Lower leg skin (tissue), 4 donors: ENCODE measurements at regions of chr6 and their contacts with region 1.

Region 1: DNA sequence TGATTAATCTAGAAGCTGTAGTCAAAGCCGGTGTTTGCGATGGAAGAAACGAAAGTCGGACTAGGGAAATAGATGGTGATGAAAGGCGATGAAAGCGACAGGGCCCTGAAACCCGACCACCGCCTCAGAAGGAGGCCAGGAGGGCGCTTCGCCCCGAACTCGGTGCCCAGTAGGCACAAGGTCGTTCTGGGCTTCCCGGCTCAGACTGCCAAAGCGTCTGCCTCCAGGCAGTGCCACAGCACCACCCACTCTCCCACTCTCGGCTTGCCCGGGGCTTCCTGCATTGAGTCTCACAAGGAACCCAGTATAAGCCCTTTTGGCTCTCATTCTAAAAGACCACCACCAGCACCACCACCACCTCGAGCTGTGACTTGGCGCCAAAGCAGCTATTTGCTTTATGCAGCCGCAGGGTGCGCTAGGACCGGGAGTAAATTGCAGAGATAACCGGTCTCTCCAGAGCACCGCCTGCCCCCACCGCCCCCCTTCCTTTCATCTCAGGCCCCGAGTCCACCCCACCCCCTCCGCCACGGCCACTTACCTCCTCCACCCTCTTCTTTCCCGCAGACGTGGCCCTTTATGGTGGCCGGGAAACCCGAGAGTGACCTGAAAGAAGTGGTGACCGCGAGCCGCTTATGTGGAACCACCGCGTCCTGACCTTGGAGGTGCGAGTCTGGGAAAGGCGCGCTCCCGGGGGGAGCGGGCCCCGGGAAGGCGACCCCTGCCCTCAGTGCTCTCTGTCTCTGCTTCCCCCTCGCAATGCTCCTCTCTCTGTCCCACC is 2.4 kb downstream of the TCF21 start:
- DNase-seq: no peak
- H3K4me3 ChIP-seq: no peak overlapping the region
- CTCF ChIP-seq: no peak
- POLR2A ChIP-seq: no peak

Region 2: DNA sequence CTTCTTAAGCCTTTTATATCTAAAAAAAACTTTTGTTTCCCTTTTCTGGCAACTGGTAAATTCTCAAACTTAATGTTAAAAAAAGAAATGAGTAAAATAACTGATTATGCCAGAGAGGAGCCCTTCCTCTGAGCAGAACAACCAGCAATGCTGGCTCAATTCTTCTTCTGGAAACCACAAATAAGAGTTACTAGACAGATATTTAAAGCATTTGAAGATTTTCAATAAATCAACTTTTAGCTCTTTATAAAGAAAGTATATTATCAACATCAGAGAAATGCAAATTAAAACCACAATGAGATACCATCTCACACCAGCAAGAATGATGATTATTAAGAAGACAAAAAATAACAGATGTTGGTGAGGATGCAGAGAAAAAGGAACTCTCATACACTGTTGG is 63.6 kb before region 1 on chr6:
- intact Hi-C with region 1: loop called (anchors 2 kb)
- DNase-seq: no peak
- H3K4me3 ChIP-seq: no peak overlapping the region
- CTCF ChIP-seq: no peak
- POLR2A ChIP-seq: no peak

Region 3: GRCh38 chr6:133854364-133855275 is 36.7 kb before region 1 on chr6:
- intact Hi-C with region 1: loop called (anchors 1 kb)
- DNase-seq: no peak
- H3K4me3 ChIP-seq: no peak overlapping the region
- CTCF ChIP-seq: no peak
- POLR2A ChIP-seq: no peak

Region 4: DNA sequence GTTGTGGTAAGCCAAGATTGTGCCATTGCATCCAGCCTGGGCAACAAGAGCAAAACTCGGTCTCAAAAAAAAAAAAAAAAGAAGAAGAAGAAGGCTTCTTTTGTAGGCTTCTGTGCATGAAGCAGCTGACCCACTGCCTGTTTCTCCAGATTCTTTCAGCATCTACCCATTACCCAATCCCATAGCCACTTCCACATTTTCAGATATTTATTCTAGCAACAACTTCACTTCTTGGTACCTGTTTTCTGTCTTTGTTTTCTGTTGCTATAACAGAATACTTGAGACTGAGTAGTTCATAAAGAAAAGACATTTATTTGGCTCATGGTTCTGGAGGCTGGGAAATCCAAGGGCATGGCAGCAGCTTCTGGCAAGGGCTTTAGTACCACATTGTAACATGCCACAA is 521.9 kb after region 1 on chr6:
- intact Hi-C with region 1: no loop called
- DNase-seq: no peak
- H3K4me3 ChIP-seq: no peak overlapping the region
- CTCF ChIP-seq: no peak
- POLR2A ChIP-seq: no peak

Region 5: DNA sequence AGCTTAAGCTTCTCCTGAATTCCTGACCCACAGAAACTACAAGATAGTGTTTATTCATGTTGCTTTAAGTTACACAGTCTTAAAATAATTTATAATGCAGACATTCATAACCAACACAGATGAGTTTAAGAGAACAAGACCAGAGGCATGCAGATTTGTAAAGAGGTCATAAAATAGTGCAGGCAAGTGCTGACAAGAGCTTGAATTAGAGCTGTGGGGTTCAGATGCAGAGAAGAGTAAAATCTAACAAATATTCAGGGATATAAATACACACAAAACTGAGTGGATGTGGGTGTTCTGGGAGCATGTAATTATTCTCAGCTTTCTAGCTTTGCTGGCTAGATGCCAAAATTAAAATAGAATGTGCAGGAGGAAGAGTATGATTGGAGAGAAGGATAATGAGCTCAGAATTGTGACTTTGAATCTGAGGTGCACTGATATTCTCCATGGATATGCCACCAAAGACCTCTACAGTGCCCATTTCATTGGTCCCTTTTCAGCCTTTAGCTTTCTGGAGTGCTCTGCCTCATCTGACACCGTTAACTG is 718.5 kb after region 1 on chr6:
- intact Hi-C with region 1: no loop called
- DNase-seq: no peak
- H3K4me3 ChIP-seq: no peak overlapping the region
- CTCF ChIP-seq: no peak
- POLR2A ChIP-seq: no peak